ENCODE measurements at regions of chr4 and their contacts with region 1.

Region 1: GRCh38 chr4:107736924-107737448 is 17.0 kb upstream of the PAPSS1 start:
- DNase-seq: peak; percentile 40
- H3K4me3 Mint-ChIP-seq: no peak overlapping the region
- H3K27ac Mint-ChIP-seq: no peak overlapping the region
- H3K4me1 Mint-ChIP-seq: no peaks in the 10 kb centered on the region
- H3K27me3 Mint-ChIP-seq: no peaks in the 10 kb centered on the region

Region 2: DNA sequence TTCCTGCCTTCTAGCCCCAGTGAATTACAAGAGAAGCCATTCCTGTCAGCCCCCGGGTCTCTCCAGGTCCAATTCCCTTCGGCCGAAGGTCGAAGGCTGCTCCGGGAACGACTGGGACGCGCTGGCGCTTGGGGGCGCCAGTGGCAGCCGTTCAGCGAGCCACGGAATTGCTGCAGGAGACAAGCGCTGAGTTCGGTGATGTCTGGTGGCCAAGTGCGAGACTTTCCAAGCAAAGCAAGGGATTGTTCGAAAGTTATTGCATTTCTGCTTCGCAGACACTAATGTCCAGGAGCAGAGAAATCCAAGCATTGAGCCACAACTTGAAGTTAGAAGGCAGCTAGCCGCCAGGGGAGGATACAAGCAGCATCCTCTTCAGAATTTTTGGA is 699.8 kb before region 1 on chr4:
- CTCF ChIA-PET with region 1: no interaction called
- intact Hi-C with region 1: loop called (anchors 5 kb)
- DNase-seq: peak; percentile 14
- H3K4me3 Mint-ChIP-seq: no peak overlapping the region
- H3K27ac Mint-ChIP-seq: no peak overlapping the region
- H3K4me1 Mint-ChIP-seq: peaks cover 27% of the 10 kb centered on the region
- H3K27me3 Mint-ChIP-seq: peaks cover 61% of the 10 kb centered on the region

Region 3: DNA sequence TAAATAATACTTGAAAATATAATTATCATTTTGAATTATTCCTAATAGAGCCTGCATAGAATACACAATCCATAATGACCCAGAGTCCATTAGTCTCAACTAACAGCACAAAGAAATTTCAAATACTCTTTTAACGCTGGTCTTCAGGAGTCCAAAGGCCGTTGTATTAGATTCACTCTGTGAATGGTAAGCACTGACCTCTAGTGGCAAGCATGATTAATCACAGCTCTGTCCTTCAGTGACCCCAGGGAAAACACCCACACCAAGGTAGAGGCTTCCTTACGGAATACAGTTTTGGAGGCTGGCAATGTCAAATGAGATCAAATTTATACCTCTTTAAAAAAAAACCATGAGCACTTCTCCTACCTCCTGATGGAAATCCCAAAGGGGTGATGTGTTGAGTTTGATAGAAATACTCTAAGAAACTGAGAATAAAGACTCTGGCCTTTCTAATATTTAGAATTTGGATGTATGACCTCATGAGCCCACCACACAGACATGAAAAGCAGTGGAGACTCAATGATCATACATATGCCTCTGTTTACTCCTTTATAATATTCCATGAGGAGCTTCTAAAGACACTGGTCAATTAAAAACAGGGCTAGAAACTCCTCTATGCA is 553.7 kb before region 1 on chr4:
- CTCF ChIA-PET with region 1: no interaction called
- intact Hi-C with region 1: loop called (anchors 5 kb)
- DNase-seq: peak; percentile 6
- H3K4me3 Mint-ChIP-seq: no peak overlapping the region
- H3K27ac Mint-ChIP-seq: no peak overlapping the region
- H3K4me1 Mint-ChIP-seq: no peaks in the 10 kb centered on the region
- H3K27me3 Mint-ChIP-seq: peaks cover 4% of the 10 kb centered on the region

Region 4: GRCh38 chr4:107261228-107261874 is 475.6 kb before region 1 on chr4:
- CTCF ChIA-PET with region 1: no interaction called
- intact Hi-C with region 1: loop called (anchors 10 kb)
- DNase-seq: no peak
- H3K4me3 Mint-ChIP-seq: no peak overlapping the region
- H3K27ac Mint-ChIP-seq: no peak overlapping the region
- H3K4me1 Mint-ChIP-seq: no peaks in the 10 kb centered on the region
- H3K27me3 Mint-ChIP-seq: peaks cover 12% of the 10 kb centered on the region

Region 5: DNA sequence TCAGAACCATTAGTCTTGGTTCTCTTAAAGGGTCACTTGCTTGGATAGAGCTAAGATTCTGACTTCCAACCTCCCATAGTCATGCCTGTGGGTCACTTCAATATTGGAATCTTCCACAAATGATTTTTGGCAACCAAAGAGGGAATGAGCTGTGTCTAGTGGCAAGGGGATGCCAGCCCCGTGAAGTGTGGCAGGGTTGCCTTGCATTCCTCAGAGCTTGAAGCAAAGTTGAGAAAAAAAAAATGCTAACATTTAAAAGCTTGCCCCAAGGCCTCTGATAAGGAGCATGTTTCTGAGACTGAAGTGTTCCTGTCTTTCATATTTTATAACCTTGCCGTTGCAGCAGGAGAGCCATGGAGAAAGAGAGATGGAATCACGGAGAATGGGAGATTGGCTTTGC is 137.1 kb before region 1 on chr4:
- CTCF ChIA-PET with region 1: no interaction called
- intact Hi-C with region 1: loop called (anchors 5 kb)
- DNase-seq: no peak
- H3K4me3 Mint-ChIP-seq: no peak overlapping the region
- H3K27ac Mint-ChIP-seq: no peak overlapping the region
- H3K4me1 Mint-ChIP-seq: no peaks in the 10 kb centered on the region
- H3K27me3 Mint-ChIP-seq: no peaks in the 10 kb centered on the region

Region 6: DNA sequence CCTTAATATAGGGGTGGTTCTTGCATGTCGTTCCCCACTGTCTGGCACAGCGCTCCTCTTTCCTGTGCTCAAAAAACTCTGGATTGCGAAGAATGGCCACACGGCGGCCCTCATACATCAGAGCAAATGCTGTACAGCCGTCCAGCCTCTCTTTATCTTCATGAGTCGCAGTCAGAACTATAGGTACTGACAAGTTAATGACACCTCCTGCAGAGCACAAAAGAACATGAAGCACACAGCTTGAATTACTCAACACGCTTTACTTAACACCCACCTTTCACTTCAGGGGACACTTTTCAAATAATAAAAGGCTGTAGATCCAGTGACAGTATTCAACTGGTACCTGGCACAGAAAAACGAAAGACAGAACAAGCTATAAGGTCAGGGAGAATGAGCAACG is 82.3 kb before region 1 on chr4:
- CTCF ChIA-PET with region 1: interaction called, 3 read pairs
- intact Hi-C with region 1: loop called (anchors 5 kb)
- DNase-seq: no peak
- H3K4me3 Mint-ChIP-seq: no peak overlapping the region
- H3K27ac Mint-ChIP-seq: no peak overlapping the region
- H3K4me1 Mint-ChIP-seq: no peaks in the 10 kb centered on the region
- H3K27me3 Mint-ChIP-seq: no peaks in the 10 kb centered on the region

Region 7: GRCh38 chr4:107747748-107748486 is 10.9 kb after region 1 on chr4:
- CTCF ChIA-PET with region 1: interaction called, 10 read pairs
- intact Hi-C with region 1: no loop called
- DNase-seq: no peak
- H3K4me3 Mint-ChIP-seq: no peak overlapping the region
- H3K27ac Mint-ChIP-seq: no peak overlapping the region
- H3K4me1 Mint-ChIP-seq: peaks cover 4% of the 10 kb centered on the region
- H3K27me3 Mint-ChIP-seq: peaks cover 22% of the 10 kb centered on the region

Measured in activated naive CD4-positive, alpha-beta T cell treated with anti-CD3 and anti-CD28 coated beads for 36 hours (primary cell).